Ascending aorta (tissue), 2 donors: ENCODE measurements at regions of chr11 and their contacts with region 1.

Region 1: DNA sequence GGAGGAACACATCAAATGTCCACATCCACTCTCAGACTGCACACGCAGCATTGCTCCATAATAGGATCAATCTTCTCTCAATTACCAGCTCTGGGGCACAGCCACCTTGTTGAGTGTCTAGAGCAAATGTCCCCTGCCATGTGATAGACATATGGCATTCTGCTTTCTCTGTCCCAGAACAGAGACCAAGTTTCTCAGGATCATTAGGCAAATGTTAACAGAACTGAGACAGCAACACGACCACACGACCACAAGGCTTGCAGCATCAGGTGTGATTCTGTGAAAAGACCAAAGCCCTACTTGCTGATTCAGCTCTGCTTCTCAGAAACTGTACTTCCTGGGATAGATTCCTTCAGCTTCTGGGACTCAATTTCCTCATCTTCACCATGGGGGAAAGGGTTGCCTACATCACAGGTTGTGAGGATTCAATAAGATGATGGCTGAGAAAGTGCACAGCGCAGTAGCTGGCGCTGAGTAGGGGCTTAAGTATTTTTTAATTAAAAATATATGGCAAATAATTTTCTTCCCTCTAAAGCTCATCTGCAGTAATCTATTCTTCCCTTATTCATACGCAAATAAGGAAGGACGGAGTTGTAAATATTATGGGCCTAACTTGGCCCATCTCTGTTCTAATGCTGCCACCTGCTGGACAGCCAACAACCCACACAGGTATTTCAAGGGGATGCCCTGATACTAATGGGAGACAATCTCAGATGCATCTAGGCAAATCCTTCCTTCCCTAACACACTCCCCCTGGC is 54.3 kb upstream of the USP47 start:
- DNase-seq: peak in 1 of 2 donors; percentile 81
- H3K4me3 ChIP-seq: no peak overlapping the region
- H3K27ac ChIP-seq: no peak overlapping the region
- H3K4me1 ChIP-seq: no peaks in the 10 kb centered on the region
- H3K27me3 ChIP-seq: no peaks in the 10 kb centered on the region
- CTCF ChIP-seq: peak; percentile 85 to 86 (median 86)

Region 2: DNA sequence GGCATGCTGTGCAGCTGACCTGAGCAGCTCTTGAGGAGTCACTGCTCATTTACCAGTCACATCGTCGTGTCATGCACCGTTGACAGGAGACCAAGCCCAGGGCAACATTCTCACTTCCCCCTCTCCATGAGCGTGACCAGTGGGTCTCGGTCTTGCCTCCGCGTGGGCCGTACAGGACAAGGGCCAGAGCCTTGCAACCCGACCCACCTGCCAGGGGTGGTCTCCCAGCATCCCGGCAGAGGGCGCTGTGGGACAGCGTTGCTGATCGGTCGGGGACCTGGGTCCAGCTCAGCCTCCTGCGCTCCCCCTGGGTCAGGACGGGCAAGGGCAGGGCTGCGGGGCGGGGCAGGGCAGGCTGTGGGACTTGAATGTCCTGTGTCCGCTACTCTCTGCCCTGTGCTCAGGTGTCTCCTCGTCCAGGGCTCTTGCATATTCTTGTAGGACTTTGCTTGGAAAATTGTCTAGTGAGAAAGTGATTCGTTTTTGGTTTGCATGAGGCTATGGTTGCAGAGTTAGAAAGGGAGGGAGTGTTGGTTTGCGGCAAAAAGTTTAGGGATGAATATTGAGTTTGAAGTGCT is 995.0 kb before region 1 on chr11:
- intact Hi-C with region 1: loop called (anchors 5 kb)
- DNase-seq: peak; percentile 36 to 92
- H3K4me3 ChIP-seq: peak overlapping the region in 1 of 2 donors; percentile 10
- H3K27ac ChIP-seq: no peak overlapping the region
- H3K4me1 ChIP-seq: peaks cover 0 to 7% of the 10 kb centered on the region in 2 donors
- H3K27me3 ChIP-seq: no peaks in the 10 kb centered on the region
- CTCF ChIP-seq: peak; percentile 93 to 96 (median 96)

Region 3: GRCh38 chr11:11028017-11028692 is 759.3 kb before region 1 on chr11:
- intact Hi-C with region 1: loop called (anchors 1 kb)
- DNase-seq: peak in 1 of 2 donors; percentile 77
- H3K4me3 ChIP-seq: no peak overlapping the region
- H3K27ac ChIP-seq: no peak overlapping the region
- H3K4me1 ChIP-seq: no peaks in the 10 kb centered on the region
- H3K27me3 ChIP-seq: no peaks in the 10 kb centered on the region
- CTCF ChIP-seq: peak; percentile 68 to 79 (median 75)

Region 4: DNA sequence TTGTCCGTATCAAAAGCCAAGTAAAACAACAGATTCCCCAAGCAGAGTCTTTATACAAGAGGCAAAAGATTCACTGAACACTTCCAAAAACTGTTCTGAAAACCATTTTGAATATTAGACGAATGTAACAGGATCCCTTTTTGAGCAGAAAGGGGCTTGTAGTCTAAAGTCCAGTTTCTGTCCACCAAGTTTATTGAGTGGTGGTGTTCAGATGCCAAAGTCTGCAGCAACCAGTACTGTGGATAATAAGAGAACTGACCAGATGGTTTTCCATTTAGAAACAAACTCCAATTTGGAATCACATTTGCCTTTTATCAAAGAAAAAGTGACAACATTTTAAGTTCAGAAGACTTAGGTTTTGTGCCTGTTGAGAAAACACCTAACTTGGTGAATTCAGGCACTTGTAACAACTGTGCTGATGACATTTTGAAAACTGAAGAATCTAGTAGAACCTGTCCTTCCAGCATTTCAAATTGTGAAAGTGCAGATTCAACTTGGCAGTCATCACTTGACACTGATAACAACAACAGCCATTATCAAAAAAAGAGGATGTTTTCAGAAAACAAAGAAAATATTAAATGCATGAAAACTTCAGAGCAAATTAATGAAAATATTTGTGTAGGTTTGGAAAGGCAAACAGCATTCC is 651.5 kb before region 1 on chr11:
- intact Hi-C with region 1: loop called (anchors 10 kb)
- DNase-seq: no peak
- H3K4me3 ChIP-seq: no peak overlapping the region
- H3K27ac ChIP-seq: no peak overlapping the region
- H3K4me1 ChIP-seq: peaks cover 5% of the 10 kb centered on the region in 2 donors
- H3K27me3 ChIP-seq: no peaks in the 10 kb centered on the region
- CTCF ChIP-seq: no peak